Heart right ventricle (tissue), 16 donors: ENCODE measurements at regions of chr13 and their contacts with region 1.

Region 1: GRCh38 chr13:93976528-93976927 is 503.0 kb downstream of the DCT start:
- DNase-seq: no peak
- ATAC-seq: no peak
- H3K4me3 ChIP-seq: no peak overlapping the region
- H3K27ac ChIP-seq: no peak overlapping the region
- H3K4me1 ChIP-seq: no peaks in the 10 kb centered on the region
- H3K27me3 ChIP-seq: no peaks in the 10 kb centered on the region
- CTCF ChIP-seq: no peak

Region 2: GRCh38 chr13:93723316-93723715 is 253.2 kb before region 1 on chr13:
- intact Hi-C with region 1: no loop called
- DNase-seq: no peak
- ATAC-seq: no peak
- H3K4me3 ChIP-seq: no peak overlapping the region
- H3K27ac ChIP-seq: no peak overlapping the region
- H3K4me1 ChIP-seq: no peaks in the 10 kb centered on the region
- H3K27me3 ChIP-seq: no peaks in the 10 kb centered on the region
- CTCF ChIP-seq: no peak

Region 3: DNA sequence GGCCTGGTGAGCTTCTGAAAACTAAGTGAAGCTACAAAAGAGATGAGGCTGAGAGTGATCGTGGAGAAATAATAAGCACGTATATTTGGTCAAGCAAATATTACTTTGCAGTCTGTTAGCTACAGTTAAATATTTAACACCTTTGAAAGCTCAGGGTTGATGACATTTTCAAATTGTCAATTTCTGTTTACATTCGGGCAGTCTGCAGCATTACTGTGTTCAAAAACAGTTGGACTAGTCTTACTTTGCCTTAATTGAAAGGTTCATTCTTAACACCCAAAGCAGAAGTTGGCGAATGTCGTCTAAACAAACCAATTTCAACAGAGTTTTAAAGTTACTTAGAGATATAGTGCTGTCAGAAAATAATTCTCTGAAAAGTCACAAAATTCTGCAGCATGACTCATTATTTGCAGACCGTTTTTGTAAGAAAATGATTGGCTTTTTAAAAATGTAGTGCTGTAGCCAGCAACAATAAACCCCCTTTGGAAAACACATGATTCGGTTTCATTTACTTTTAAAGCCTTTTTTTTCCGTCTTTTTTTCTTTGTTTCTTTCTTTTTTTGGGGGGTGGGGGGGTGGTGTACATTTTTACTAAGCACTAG is 200.9 kb before region 1 on chr13:
- intact Hi-C with region 1: no loop called
- DNase-seq: no peak
- ATAC-seq: no peak
- H3K4me3 ChIP-seq: no peak overlapping the region
- H3K27ac ChIP-seq: no peak overlapping the region
- H3K4me1 ChIP-seq: no peaks in the 10 kb centered on the region
- H3K27me3 ChIP-seq: no peaks in the 10 kb centered on the region
- CTCF ChIP-seq: no peak

Region 4: GRCh38 chr13:93926425-93926824 is 50.1 kb before region 1 on chr13:
- intact Hi-C with region 1: loop called in 1 of 10 experiments (anchors 5 kb)
- DNase-seq: no peak
- ATAC-seq: no peak
- H3K4me3 ChIP-seq: no peak overlapping the region
- H3K27ac ChIP-seq: no peak overlapping the region
- H3K4me1 ChIP-seq: no peaks in the 10 kb centered on the region
- H3K27me3 ChIP-seq: no peaks in the 10 kb centered on the region
- CTCF ChIP-seq: no peak